ENCODE measurements at regions of chr5 and their contacts with region 1.

Region 1: GRCh38 chr5:81023261-81023970 is 63.3 kb downstream of the RASGRF2 start:
- DNase-seq: no peak
- ATAC-seq: peak; percentile 57
- H3K4me3 ChIP-seq: no peak overlapping the region
- H3K27ac ChIP-seq: no peak overlapping the region
- H3K4me1 ChIP-seq: peaks cover 58% of the 10 kb centered on the region
- H3K27me3 ChIP-seq: no peaks in the 10 kb centered on the region
- CTCF ChIP-seq: no peak
- EP300 ChIP-seq: no peak
- POLR2A ChIP-seq: no peak
- RAD21 ChIP-seq: no peak

Region 2: DNA sequence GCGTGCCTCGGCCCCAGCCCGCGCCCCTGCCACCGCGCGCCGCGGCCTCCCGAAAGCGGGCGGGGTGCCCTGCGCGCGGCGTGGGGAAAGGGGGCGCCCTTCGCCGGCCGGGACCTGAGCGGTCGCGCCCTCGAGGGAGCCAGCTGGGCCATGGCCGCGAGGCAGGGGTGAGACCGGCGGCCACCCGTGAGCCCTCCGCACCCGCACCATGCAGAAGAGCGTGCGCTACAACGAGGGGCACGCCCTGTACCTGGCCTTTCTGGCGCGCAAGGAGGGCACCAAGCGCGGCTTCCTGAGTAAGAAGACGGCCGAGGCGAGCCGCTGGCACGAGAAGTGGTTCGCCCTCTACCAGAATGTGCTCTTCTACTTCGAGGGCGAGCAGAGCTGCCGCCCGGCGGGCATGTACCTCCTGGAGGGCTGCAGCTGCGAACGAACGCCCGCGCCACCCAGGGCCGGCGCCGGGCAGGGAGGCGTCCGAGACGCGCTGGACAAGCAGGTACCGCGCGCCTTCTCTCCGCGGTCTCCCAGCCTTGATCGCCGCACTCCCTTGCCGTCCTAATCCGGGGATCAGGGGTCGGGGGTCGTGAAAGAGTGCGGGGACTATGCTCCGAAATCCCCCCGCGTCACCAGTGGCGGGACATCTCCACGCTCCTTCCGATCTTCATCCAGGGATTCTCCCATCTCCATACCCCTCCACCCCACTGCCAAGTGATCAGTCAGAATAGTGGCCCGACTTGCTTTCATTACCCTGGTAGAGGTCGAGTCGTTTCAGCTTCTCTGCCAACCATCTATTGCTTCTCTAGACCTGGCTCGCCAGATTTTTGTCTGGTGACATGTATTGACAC is 62.7 kb before region 1 on chr5:
- CTCF ChIA-PET with region 1: no interaction called
- POLR2A ChIA-PET with region 1: interaction called, 11 read pairs
- in situ Hi-C with region 1: no loop called
- intact Hi-C with region 1: loop called (anchors 5 kb)
- DNase-seq: peak; percentile 18
- ATAC-seq: peak; percentile 78
- H3K4me3 ChIP-seq: peak overlapping the region; percentile 84 to 98 (median 93)
- H3K27ac ChIP-seq: peak overlapping the region; percentile 75
- H3K4me1 ChIP-seq: peaks cover 59% of the 10 kb centered on the region
- H3K27me3 ChIP-seq: peaks cover 0 to 3% of the 10 kb centered on the region in 2 experiments; a peak in 1 of 5 replicates
- CTCF ChIP-seq: peak; percentile 69
- EP300 ChIP-seq: no peak
- POLR2A ChIP-seq: peak in 1 of 2 experiments; percentile 19; a peak in 1 of 4 replicates
- RAD21 ChIP-seq: peak; percentile 65; the same call in 1 of the 2 replicates

Region 3: GRCh38 chr5:81035522-81035921 is 12.1 kb after region 1 on chr5:
- CTCF ChIA-PET with region 1: no interaction called
- POLR2A ChIA-PET with region 1: no interaction called
- in situ Hi-C with region 1: no loop called
- intact Hi-C with region 1: loop called (anchors 1 kb)
- DNase-seq: no peak
- ATAC-seq: no peak
- H3K4me3 ChIP-seq: no peak overlapping the region
- H3K27ac ChIP-seq: no peak overlapping the region
- H3K4me1 ChIP-seq: no peaks in the 10 kb centered on the region
- H3K27me3 ChIP-seq: no peaks in the 10 kb centered on the region
- CTCF ChIP-seq: no peak
- EP300 ChIP-seq: no peak
- POLR2A ChIP-seq: no peak
- RAD21 ChIP-seq: no peak

Region 4: GRCh38 chr5:81125959-81126358 is 102.5 kb after region 1 on chr5:
- CTCF ChIA-PET with region 1: no interaction called
- POLR2A ChIA-PET with region 1: no interaction called
- in situ Hi-C with region 1: no loop called
- intact Hi-C with region 1: no loop called
- DNase-seq: peak; percentile 2
- ATAC-seq: 0 out of 3 replicates have a peak, but pooled peaks have one; percentile 35
- H3K4me3 ChIP-seq: no peak overlapping the region
- H3K27ac ChIP-seq: no peak overlapping the region
- H3K4me1 ChIP-seq: no peaks in the 10 kb centered on the region
- H3K27me3 ChIP-seq: no peaks in the 10 kb centered on the region
- CTCF ChIP-seq: no peak
- EP300 ChIP-seq: no peak
- POLR2A ChIP-seq: no peak
- RAD21 ChIP-seq: no peak